Esophagus muscularis mucosa (tissue), 4 donors: ENCODE measurements at regions of chr13 and their contacts with region 1.

Region 1: DNA sequence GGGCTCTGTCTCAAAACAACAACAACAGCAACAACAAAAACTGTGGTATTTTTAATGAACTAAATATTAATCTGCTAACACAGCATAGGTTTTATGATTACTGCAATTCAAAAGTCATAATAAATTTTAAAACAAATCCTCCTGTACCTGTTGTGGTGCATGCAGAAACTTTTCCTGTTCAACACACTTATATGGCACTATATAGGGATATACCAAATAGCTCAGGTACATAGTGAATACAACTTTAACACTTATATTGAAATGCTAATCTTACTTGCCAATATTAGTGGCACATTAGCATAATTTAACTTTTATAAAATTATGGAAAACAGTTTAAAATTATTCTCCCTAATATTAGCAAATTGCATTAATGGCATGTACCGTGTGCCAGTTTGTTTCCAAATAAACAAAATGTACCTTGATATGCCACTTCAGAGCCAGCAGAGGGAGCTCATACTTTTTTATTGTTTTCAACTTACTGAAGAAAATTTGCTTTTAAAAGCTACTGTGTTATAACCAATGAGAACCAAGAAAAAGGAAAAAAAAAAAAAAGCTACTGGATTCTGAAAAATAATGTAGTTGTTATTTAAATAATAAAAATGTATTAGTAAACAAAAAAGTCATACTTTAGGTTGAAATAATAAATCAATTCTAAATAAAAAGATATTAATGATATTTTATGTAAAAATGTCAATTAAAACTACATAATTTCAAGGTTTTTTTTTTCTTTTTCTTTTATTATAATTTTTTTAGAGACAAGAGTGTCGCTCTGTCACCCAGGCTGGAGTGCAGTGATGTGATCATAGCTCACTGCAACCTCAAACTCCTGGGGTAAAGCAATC is 18.0 kb upstream of the RBM26 start:
- DNase-seq: no peak
- H3K4me3 ChIP-seq: no peak overlapping the region
- H3K27ac ChIP-seq: no peak overlapping the region
- H3K4me1 ChIP-seq: no peaks in the 10 kb centered on the region
- H3K27me3 ChIP-seq: no peaks in the 10 kb centered on the region
- CTCF ChIP-seq: peak; percentile 72 to 77 (median 72)
- EP300 ChIP-seq: no peak
- POLR2A ChIP-seq: no peak

Region 2: GRCh38 chr13:79541426-79542049 is 117.5 kb after region 1 on chr13:
- intact Hi-C with region 1: loop called (anchors 2 kb)
- DNase-seq: no peak
- H3K4me3 ChIP-seq: no peak overlapping the region
- H3K27ac ChIP-seq: no peak overlapping the region
- H3K4me1 ChIP-seq: peaks cover 0 to 2% (median 0%) of the 10 kb centered on the region in 4 donors
- H3K27me3 ChIP-seq: no peaks in the 10 kb centered on the region
- CTCF ChIP-seq: peak; percentile 85 to 90 (median 89)
- EP300 ChIP-seq: no peak
- POLR2A ChIP-seq: no peak